Transverse colon (tissue), 4 donors: ENCODE measurements at regions of chr13 and their contacts with region 1.

Region 1: GRCh38 chr13:67061750-67062149 is 168.4 kb downstream of the PCDH9 start:
- DNase-seq: no peak
- H3K4me3 ChIP-seq: no peak overlapping the region
- H3K27ac ChIP-seq: no peak overlapping the region
- H3K4me1 ChIP-seq: no peaks in the 10 kb centered on the region
- H3K27me3 ChIP-seq: no peaks in the 10 kb centered on the region
- CTCF ChIP-seq: no peak
- EP300 ChIP-seq: no peak
- POLR2A ChIP-seq: no peak

Region 2: GRCh38 chr13:66745307-66745706 is 316.4 kb before region 1 on chr13:
- in situ Hi-C with region 1: no loop called
- intact Hi-C with region 1: no loop called
- DNase-seq: no peak
- H3K4me3 ChIP-seq: no peak overlapping the region
- H3K27ac ChIP-seq: no peak overlapping the region
- H3K4me1 ChIP-seq: no peaks in the 10 kb centered on the region
- H3K27me3 ChIP-seq: no peaks in the 10 kb centered on the region
- CTCF ChIP-seq: no peak
- EP300 ChIP-seq: no peak
- POLR2A ChIP-seq: no peak

Region 3: GRCh38 chr13:67318398-67318797 is 256.6 kb after region 1 on chr13:
- in situ Hi-C with region 1: no loop called
- intact Hi-C with region 1: loop called (anchors 5 kb)
- DNase-seq: no peak
- H3K4me3 ChIP-seq: no peak overlapping the region
- H3K27ac ChIP-seq: no peak overlapping the region
- H3K4me1 ChIP-seq: no peaks in the 10 kb centered on the region
- H3K27me3 ChIP-seq: no peaks in the 10 kb centered on the region
- CTCF ChIP-seq: no peak
- EP300 ChIP-seq: no peak
- POLR2A ChIP-seq: no peak